Activated T-helper 1 cell treated with anti-CD3 and anti-CD28 coated beads, Interleukin-12 subunit alpha, Interleukin-12 subunit beta, Interleukin-2, Interleukin-4 antibody, amounts not matched to agents 30 ng/mL and 10 ng/mL and 1 ng/mL, durations not matched to agents 14 hours and 24 hours and 36 hours (primary cell): ENCODE measurements at regions of chr19 and their contacts with region 1.

Region 1: GRCh38 chr19:23395041-23395721 is at the start of gene ZNF91:
- DNase-seq: peak; percentile 88
- H3K4me3 Mint-ChIP-seq: peak within 1 kb of the TSS; percentile 97
- H3K27ac Mint-ChIP-seq: peak within 1 kb of the TSS; percentile 96
- H3K4me1 Mint-ChIP-seq: peaks cover 9% of the 10 kb centered on the region
- H3K27me3 Mint-ChIP-seq: no peaks in the 10 kb centered on the region
- total RNA-seq, gene ZNF91: 20.5 and 22.4 TPM in 2 replicates

Region 2: GRCh38 chr19:21767065-21767800 is 1627.9 kb before region 1 on chr19 and contains the start of gene ZNF100:
- intact Hi-C with region 1: loop called (anchors 1 kb)
- DNase-seq: peak; percentile 80
- H3K4me3 Mint-ChIP-seq: peak within 1 kb of the TSS; percentile 94
- H3K27ac Mint-ChIP-seq: peak within 1 kb of the TSS; percentile 85
- H3K4me1 Mint-ChIP-seq: peaks cover 35% of the 10 kb centered on the region
- H3K27me3 Mint-ChIP-seq: no peaks in the 10 kb centered on the region
- total RNA-seq, gene ZNF100: 20.6 and 21.8 TPM in 2 replicates

Region 3: GRCh38 chr19:23249911-23250649 is 145.1 kb before region 1 on chr19 and contains the start of gene ZNF724:
- intact Hi-C with region 1: loop called (anchors 1 kb)
- DNase-seq: peak; percentile 87
- H3K4me3 Mint-ChIP-seq: peak within 1 kb of the TSS; percentile 93
- H3K27ac Mint-ChIP-seq: peak within 1 kb of the TSS; percentile 93
- H3K4me1 Mint-ChIP-seq: peaks cover 7% of the 10 kb centered on the region
- H3K27me3 Mint-ChIP-seq: no peaks in the 10 kb centered on the region
- total RNA-seq, gene ZNF724: 12.1 and 14.1 TPM in 2 replicates

Region 4: DNA sequence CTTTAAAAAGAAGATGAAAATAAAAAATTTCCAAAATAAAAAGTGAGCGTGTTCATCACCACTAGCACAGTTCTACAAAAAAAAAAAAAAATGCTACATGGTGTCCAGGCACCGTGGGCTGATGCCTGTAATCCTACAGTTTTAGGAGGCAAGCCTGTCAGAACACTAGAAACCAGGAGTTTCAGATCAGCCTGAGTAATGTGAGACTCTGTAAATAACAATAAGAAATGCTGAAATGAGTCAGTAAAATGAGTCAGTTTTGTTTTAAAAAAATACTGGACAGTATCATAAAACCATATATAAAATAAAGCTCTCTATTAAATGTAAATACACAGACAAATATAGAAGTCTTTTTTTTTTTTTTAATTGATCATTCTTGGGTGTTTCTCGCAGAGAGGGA is 30.0 kb before region 1 on chr19:
- intact Hi-C with region 1: no loop called
- DNase-seq: no peak
- H3K4me3 Mint-ChIP-seq: no peak overlapping the region
- H3K27ac Mint-ChIP-seq: no peak overlapping the region
- H3K4me1 Mint-ChIP-seq: no peaks in the 10 kb centered on the region
- H3K27me3 Mint-ChIP-seq: no peaks in the 10 kb centered on the region

Region 5: DNA sequence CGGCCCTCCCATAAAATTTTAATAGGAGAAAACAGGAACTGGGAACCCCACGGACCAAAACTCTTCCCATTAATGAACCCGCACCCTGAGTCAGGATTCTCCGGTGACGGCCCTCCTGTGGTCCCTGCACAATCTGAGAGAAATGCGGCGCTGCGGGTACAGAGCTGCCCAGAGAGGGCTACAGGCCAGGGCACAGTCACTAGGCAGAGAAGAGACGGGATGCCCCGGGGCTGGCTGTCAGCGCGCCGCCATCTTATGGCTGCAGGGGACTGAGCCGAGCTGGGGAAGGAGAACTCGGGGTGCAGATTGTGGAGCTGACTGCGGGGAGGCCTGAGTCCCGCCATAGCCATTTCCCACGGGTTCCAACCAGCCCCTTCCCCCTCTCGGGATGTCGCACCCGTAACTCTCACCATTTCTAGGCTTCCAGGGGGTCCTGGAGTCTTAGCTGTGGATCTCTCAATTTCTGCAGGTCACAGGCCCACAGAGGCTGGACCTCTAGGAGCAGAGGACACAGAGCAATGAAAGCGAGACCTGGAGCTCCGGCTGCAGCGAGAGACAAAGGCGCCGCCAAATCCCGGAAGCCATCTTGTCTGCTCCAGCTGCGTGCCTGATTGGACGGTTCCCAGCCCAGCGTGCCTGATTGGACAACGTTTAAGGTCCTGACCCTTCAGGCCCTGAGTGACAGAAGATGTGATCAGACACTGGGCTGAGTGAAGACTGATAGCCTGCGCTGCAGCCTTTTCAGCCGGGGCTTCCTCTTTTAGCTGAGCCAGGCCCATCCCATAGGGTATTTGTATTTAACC is 291.6 kb after region 1 on chr19 and contains the start of gene ZNF675:
- intact Hi-C with region 1: loop called (anchors 2 kb)
- DNase-seq: peak; percentile 82
- H3K4me3 Mint-ChIP-seq: peak within 1 kb of the TSS; percentile 99
- H3K27ac Mint-ChIP-seq: peak within 1 kb of the TSS; percentile 97
- H3K4me1 Mint-ChIP-seq: peaks cover 9% of the 10 kb centered on the region
- H3K27me3 Mint-ChIP-seq: no peaks in the 10 kb centered on the region
- total RNA-seq, gene ZNF675: 16.7 and 17.0 TPM in 2 replicates

Region 6: DNA sequence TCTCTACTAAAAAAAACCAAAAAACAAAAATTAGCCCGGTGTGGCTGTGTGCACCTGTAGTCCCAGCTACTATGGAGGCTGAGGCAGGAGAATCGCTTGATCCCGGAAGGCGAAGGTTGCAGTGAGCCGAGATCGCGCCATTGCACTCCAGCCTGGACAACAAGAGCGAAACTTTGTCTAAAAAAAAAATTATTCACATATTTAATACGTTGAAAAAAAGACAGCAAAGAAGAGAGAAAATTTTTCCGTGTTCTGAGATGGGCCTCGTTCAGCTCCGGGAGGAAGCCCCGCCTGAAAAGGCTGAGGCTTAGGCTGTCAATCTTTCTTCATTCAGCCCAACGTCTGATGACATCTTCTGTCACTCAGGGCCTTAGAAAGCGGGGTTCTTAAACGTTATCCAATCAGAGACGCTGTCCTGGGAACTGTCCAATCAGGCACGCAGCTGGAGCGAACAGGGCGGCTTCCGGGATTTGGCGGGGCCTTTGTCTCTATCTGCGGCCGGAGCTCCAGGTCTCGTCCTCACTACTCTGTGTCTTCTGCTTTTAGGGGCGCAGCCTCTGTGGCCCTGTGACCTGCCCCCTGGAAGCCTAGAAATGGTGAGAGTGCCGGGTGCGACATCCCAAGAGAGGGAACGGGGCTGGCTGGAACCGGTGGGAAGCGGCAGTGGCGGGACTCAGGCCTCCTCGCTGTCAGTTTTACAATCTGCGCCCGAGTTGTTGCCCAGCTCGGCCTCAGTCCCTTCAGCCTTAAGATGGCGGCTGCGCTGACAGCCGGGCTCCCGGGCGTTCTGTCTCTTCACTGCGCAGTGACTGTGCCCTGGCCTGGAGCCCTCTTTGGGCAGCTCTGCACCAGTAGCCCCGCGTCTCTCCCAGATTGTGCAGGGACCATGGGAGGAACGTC is 519.5 kb after region 1 on chr19 and contains the start of gene ZNF726:
- intact Hi-C with region 1: loop called (anchors 1 kb)
- DNase-seq: peak; percentile 82
- H3K4me3 Mint-ChIP-seq: peak within 1 kb of the TSS; percentile 95
- H3K27ac Mint-ChIP-seq: peak within 1 kb of the TSS; percentile 95
- H3K4me1 Mint-ChIP-seq: no peaks in the 10 kb centered on the region
- H3K27me3 Mint-ChIP-seq: no peaks in the 10 kb centered on the region
- total RNA-seq, gene ZNF726: 10.7 and 12.6 TPM in 2 replicates

Region 7: DNA sequence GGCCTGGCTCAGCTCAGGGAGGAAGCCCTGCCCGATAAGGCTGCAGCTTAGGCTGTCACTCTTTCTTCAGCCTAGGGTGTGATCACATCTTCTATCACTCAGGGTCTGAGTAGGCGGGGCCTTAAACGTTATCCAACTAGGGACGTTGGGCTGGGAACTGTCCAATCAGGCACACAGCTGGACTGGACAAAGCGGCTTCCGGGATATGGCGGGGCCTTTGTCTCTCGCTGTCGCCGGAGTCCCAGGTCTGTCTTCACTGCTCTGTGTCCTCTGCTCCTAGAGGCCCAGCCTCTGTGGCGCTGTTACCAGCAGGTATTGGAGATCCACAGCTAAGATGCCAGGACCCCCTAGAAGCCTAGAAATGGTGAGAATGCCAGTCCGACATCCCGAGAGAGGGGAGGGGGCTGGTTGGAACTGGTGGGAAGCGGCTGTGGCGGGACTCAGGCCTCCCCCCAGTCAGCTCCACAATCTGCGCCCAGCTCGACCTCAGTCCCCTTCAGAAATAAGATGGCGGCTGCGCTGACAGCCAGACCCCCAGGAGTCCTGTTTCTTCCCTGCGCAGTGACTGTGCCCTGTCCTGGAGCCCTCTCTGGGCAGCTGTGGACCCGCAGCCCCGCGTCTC is 691.9 kb after region 1 on chr19 and contains the start of gene ZNF254:
- intact Hi-C with region 1: loop called (anchors 5 kb)
- DNase-seq: peak; percentile 77
- H3K4me3 Mint-ChIP-seq: peak within 1 kb of the TSS; percentile 95
- H3K27ac Mint-ChIP-seq: peak within 1 kb of the TSS; percentile 95
- H3K4me1 Mint-ChIP-seq: no peaks in the 10 kb centered on the region
- H3K27me3 Mint-ChIP-seq: no peaks in the 10 kb centered on the region
- total RNA-seq, gene ZNF254: 7.8 and 8.4 TPM in 2 replicates